ENCODE measurements at regions of chr1 and their contacts with region 1.

Region 1: GRCh38 chr1:230066466-230067404 is at the start of gene GALNT2:
- DNase-seq: peak; percentile 97
- H3K4me3 Mint-ChIP-seq: peak within 1 kb of the TSS; percentile 94
- H3K27ac Mint-ChIP-seq: peak within 1 kb of the TSS; percentile 95
- H3K4me1 Mint-ChIP-seq: peaks cover 37% of the 10 kb centered on the region
- H3K27me3 Mint-ChIP-seq: peaks cover 4% of the 10 kb centered on the region
- total RNA-seq, gene GALNT2: 68.5 and 72.4 TPM in 2 replicates

Region 2: DNA sequence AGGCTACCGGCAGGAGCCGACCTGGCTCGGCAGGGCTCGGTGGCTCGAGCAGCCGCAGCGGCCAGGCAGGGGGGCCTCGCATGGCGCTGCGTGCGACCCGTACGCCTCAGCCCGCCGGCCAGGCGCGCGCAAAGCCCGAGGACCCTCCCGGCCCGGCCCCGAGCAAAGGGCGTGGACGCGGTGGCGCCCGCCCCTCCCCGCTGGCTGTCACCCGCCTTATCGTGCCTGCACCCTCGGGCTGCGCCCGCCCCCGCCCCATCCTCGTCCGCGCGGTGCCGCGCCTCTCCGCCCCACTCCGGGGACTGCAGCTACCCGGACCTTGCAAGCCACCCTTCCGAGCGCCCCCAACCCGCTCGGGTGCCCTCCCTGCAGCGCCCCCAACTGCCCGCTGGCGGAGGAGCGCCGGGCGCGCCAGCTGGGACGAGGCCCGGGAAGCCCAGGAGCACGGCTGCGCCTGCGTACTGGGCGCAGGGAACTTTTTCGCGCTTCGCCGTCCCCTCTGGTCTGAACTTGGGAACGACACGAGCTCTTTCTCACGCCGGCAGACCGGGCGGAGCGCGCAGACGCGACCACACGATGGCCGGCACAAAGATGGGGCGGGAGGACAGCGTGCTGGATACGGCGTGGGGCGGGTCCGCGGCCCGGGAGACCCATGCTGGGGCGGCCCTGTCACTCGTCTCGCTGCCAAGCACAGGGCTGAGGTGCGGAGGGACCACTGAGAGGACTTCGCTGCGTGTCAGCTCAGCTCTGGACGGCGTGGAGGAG is 508.0 kb before region 1 on chr1 and contains the start of gene ABCB10:
- intact Hi-C with region 1: loop called (anchors 2 kb)
- DNase-seq: peak; percentile 96
- H3K4me3 Mint-ChIP-seq: peak within 1 kb of the TSS; percentile 90
- H3K27ac Mint-ChIP-seq: peak within 1 kb of the TSS; percentile 92
- H3K4me1 Mint-ChIP-seq: peaks cover 24% of the 10 kb centered on the region
- H3K27me3 Mint-ChIP-seq: no peaks in the 10 kb centered on the region
- total RNA-seq, gene ABCB10: 46.5 and 49.7 TPM in 2 replicates

Region 3: DNA sequence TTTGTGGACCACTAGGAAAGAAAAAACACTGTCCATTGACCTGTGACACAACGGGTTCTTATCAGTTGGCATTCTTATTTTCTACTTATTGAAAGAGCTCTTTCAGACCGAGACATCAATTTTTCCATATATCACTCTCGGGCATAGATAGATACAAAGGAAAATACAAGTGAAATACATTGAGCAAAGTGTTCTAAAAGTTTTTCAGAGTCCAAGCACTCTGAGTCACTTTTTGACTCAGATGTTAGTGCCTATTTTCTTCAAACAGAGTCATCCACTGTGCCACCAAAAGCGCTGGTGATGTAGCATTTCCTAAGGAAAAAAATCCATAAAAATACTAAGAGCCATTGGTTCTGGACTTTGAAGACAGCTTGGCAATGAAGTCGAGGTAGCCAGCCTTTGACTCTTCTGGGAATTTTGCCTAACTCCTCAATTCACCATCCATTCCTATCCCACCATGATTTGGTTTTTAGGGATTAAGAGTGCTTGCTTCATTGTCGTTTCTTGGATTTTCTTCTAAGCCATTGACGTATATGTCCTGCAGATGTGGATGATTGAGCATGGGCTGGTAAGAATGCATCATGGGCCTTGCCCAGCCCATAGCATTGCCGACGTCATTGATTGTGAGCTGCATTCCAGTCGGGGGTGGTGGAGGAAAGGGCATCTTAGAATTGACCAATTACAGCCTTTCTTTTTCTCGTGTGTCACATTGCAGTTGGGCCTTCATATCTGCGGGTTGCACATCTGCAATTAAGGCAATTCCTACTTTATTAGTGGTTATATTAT is 10.9 kb after region 1 on chr1:
- intact Hi-C with region 1: loop called (anchors 1 kb)
- DNase-seq: no peak
- H3K4me3 Mint-ChIP-seq: peak overlapping the region; percentile 13
- H3K27ac Mint-ChIP-seq: peak overlapping the region; percentile 76
- H3K4me1 Mint-ChIP-seq: peaks cover 51% of the 10 kb centered on the region
- H3K27me3 Mint-ChIP-seq: no peaks in the 10 kb centered on the region

Region 4: GRCh38 chr1:230109895-230110667 is 43.3 kb after region 1 on chr1:
- intact Hi-C with region 1: loop called (anchors 1 kb)
- DNase-seq: peak; percentile 89
- H3K4me3 Mint-ChIP-seq: peak overlapping the region; percentile 37
- H3K27ac Mint-ChIP-seq: peak overlapping the region; percentile 93
- H3K4me1 Mint-ChIP-seq: peaks cover 76% of the 10 kb centered on the region
- H3K27me3 Mint-ChIP-seq: no peaks in the 10 kb centered on the region

Region 5: DNA sequence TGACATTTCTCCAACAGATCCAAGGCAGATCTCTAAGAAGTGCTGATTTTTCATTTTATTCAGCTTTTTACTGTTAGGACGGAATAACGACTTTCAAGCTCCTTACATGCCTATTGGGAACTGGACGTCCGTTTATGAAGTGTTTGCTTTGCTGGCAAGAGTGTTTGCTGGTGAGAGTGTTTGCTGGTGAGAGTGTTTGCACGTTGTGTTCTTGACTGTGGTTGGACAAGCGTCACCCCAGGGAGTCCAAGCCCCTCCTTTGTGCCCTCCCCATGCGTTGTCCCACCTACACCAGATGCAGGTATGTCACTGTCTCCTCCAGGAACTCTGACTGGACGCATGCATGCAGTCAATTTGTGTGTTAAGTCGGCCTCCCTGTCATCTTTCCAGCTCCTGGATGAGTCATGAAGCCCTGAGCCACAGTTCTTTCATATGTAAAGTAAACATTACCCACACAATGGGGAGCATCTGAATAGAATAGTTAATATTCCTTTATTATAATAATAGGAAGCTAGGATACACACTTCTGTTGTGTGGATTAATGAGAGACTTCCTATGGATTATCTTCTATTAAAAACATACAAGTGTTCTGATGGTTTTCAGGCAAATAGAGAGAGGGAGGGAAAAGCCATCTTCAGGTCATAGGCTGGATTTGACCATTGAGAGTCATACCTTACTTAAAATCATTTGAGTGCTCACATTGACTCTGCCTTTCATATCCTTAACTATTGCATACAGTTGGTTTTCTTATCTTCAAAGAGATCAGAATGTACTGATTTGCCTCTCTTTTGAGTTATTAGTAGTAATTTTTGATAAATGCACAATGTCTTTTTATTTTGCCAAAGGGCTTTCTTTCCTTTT is 119.5 kb after region 1 on chr1:
- intact Hi-C with region 1: no loop called
- DNase-seq: no peak
- H3K4me3 Mint-ChIP-seq: peak overlapping the region; percentile 36
- H3K27ac Mint-ChIP-seq: peak overlapping the region; percentile 80
- H3K4me1 Mint-ChIP-seq: peaks cover 48% of the 10 kb centered on the region
- H3K27me3 Mint-ChIP-seq: no peaks in the 10 kb centered on the region

Region 6: DNA sequence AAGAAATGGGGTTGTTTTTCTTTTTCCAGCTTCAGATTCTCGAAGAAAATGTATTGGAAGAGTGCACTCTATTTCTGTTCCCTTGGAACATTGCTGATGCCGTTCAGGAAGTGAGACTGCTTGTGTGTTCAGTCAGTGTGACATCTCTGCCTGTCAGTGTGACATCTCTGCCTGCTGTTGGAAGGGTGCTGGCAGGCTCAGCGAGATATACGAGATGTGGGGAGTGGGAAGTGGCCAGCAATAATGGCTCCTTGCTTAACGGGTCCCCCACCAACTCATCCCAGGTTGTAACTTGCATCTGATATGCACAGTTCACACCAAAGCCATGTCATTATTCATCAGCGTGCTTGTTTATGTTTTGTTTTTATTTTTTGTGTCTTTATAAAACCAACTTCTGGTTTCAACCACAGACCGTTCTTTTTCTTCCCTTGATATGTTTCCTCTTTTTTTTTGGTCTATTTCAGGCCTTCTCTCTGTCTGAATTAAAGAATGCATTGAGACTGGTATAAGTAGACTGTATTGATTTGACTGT is 145.7 kb after region 1 on chr1:
- intact Hi-C with region 1: loop called (anchors 1 kb)
- DNase-seq: peak; percentile 73
- H3K4me3 Mint-ChIP-seq: peak overlapping the region; percentile 52
- H3K27ac Mint-ChIP-seq: peak overlapping the region; percentile 91
- H3K4me1 Mint-ChIP-seq: peaks cover 67% of the 10 kb centered on the region
- H3K27me3 Mint-ChIP-seq: no peaks in the 10 kb centered on the region

Region 7: GRCh38 chr1:230642263-230642959 is 575.7 kb after region 1 on chr1 and contains the start of gene COG2:
- intact Hi-C with region 1: loop called (anchors 2 kb)
- DNase-seq: peak; percentile 99
- H3K4me3 Mint-ChIP-seq: peak within 1 kb of the TSS; percentile 96
- H3K27ac Mint-ChIP-seq: peak within 1 kb of the TSS; percentile 98
- H3K4me1 Mint-ChIP-seq: peaks cover 35% of the 10 kb centered on the region
- H3K27me3 Mint-ChIP-seq: peaks cover 18% of the 10 kb centered on the region
- total RNA-seq, gene COG2: 44.1 and 47.4 TPM in 2 replicates

Measured in activated CD4-positive, alpha-beta T cell treated with anti-CD3 and anti-CD28 coated beads, Interleukin-2, amount 10 ng/mL, durations not matched to agents 24 days and 14 days (primary cell).